GM23248 (cell line): ENCODE measurements at regions of chr7 and their contacts with region 1.

Region 1: GRCh38 chr7:93228302-93228701 is 2.0 kb upstream of the HEPACAM2 start:
- DNase-seq: peak; percentile 74
- H3K4me3 ChIP-seq: no peak overlapping the region
- H3K27ac ChIP-seq: no peak overlapping the region
- H3K4me1 ChIP-seq: 0 out of 2 replicates have a peak, but pooled peaks cover 5% of the 10 kb centered on the region
- H3K27me3 ChIP-seq: peaks cover 10% of the 10 kb centered on the region

Region 2: DNA sequence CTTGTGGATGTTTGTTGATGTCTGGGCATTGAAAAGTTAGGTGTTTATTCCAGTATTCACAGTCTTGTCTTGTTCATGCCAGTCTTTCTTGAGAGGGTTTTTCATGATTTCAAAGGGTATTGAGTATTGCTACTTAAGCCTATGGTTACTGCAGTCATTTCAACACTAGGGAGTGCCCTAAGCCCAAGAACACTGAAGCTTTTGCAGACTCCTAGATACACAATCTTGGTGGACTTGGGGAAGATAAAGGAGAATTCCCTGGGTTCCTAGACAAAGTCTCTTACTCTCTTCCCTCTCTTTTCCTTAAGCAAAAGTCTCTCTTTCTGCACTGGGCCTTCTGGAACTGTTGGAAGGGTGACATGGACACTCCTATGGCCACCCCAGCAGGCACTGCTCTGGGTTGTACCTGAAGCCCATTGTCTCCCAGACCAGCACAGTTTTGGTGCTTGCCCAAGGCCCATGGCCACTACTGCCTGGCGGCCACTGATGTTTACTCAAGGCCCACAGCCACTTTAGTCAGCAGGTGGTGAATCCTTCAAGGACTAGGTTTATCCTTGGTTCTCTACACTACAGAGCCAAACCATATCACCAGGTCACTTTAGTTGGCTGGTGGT is 135.4 kb before region 1 on chr7:
- in situ Hi-C with region 1: loop called (anchors 10 kb)
- DNase-seq: peak; percentile 60
- H3K4me3 ChIP-seq: no peak overlapping the region
- H3K27ac ChIP-seq: no peak overlapping the region
- H3K4me1 ChIP-seq: no peaks in the 10 kb centered on the region
- H3K27me3 ChIP-seq: peaks cover 20% of the 10 kb centered on the region; the same call in 1 of the 2 replicates

Region 3: DNA sequence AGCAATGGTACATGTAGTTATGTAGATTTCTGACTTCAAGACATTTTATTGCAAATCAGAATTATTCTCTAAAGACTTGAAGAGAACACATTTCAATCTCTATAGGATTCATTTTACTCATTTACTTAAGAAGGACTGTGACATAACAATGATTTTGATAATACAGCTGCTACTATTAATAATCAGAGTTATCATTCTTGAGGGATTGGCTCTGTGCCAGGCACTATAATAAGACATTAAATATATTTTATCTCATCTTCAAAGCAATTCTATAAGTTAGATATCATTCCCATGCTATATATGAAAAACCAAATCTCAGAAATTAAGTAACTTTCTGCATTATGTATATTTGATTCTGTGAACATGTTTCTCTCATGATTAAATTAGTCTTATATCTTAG is 449.9 kb after region 1 on chr7:
- in situ Hi-C with region 1: no loop called
- DNase-seq: no peak
- H3K4me3 ChIP-seq: no peak overlapping the region
- H3K27ac ChIP-seq: no peak overlapping the region
- H3K4me1 ChIP-seq: no peaks in the 10 kb centered on the region
- H3K27me3 ChIP-seq: no peaks in the 10 kb centered on the region